ENCODE measurements at regions of chr12 and their contacts with region 1.

Region 1: DNA sequence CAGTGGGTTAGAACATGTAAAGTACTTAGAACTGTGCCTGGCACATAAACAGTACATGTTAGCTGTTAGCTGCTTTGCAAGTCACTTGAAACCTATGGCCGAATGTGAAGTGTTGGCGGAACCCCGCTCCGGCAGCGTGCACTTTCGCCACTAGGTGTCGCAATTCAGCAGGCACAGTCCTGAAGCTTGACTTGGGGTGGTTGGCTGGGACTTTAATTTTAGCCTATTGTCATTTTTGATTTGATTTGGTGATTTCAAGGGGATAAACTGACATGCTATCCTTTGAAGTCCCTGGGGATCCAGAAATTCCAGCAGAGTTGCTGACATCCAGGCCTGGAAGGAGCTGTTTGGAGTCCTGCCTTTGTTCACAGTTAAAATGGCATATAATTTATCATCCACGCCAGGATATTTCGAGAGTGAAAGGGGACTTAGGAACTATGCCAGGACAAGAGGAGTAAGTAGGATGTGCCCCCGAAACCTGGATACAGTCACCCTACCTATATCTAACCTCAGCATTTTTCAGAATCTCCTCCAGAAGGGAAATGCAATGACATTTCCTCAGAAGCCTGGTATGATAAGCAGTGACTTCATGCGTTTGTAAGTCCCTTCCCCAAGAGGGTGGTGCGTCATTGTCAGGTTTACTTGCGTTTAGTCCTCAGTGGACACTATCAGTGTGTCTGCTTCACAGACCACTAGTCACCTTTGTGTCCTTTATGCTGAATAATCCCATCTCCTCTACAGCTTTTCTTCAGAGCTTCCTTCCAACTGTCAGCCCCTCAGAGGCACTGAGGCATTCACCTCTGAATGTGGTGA is 3.5 kb upstream of the TSPAN9 start:
- DNase-seq: peak; percentile 80 to 89 (median 85)
- ATAC-seq: peak in 3 of 4 donors; percentile 21 to 58 (median 43)
- H3K4me3 ChIP-seq: no peak overlapping the region
- H3K27ac ChIP-seq: peak overlapping the region in 7 of 12 donors; percentile 3 to 64 (median 32)
- H3K4me1 ChIP-seq: peaks cover 0 to 48% (median 25%) of the 10 kb centered on the region in 12 donors
- H3K27me3 ChIP-seq: peaks cover 0 to 13% (median 0%) of the 10 kb centered on the region in 9 donors
- CTCF ChIP-seq: peak; percentile 96 to 100 (median 99)
- POLR2A ChIP-seq: no peak

Region 2: DNA sequence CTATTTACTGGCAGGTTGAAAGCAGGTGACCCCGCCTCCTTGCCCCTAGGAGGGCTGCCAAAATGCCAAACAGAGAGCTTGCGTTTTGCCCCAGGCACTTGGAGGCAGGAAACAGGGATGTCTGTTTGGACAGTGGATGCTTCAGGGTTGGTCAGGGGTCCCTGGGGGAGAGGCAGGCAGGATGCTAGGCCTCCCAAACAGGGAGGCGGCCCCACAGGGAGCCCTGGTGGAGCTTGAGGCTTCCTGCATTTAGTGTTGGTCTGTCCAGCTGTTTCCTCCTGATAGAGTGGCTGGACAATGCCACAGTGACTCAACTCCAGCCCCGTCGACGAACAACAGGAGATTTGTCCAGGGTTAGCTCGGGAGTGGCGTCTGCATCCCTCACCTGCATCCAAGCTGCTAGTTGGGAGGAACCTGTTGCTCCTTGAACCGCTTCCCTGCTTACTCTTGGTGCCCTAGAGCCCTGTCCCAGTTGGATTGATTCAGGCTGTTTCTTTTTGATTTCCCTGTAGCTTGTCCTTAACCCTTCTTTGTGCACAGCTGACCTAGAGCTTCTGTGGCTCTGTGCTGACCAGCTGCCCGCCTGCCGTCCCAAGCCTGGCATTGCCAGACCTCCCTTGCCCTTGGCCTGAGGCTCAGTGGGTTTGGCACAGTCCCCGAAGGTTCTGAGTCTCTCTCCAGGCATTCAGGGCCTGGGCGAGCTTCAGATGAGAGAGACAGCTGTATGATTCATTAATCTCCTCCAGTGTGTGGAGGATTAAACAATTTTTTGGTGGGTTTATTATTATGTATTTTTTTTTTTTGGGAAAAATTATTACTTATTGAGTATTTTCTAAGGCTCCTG is 49.4 kb after region 1 on chr12:
- intact Hi-C with region 1: loop called in 4 of 10 experiments (anchors 2 to 5 kb)
- DNase-seq: peak; percentile 75 to 85 (median 84)
- ATAC-seq: peak; percentile 43 to 83 (median 69)
- H3K4me3 ChIP-seq: no peak overlapping the region
- H3K27ac ChIP-seq: peak overlapping the region; percentile 38 to 86 (median 72)
- H3K4me1 ChIP-seq: peaks cover 21 to 58% (median 52%) of the 10 kb centered on the region in 12 donors
- H3K27me3 ChIP-seq: no peaks in the 10 kb centered on the region
- CTCF ChIP-seq: peak in 7 of 12 donors; percentile 12 to 44 (median 20)
- POLR2A ChIP-seq: no peak

Region 3: GRCh38 chr12:3129301-3130056 is 55.8 kb after region 1 on chr12:
- intact Hi-C with region 1: loop called in 8 of 10 experiments (anchors 2 to 5 kb)
- DNase-seq: no peak
- ATAC-seq: peak in 1 of 4 donors; percentile 3
- H3K4me3 ChIP-seq: no peak overlapping the region
- H3K27ac ChIP-seq: peak overlapping the region; percentile 67 to 89 (median 80)
- H3K4me1 ChIP-seq: peaks cover 19 to 54% (median 47%) of the 10 kb centered on the region in 12 donors
- H3K27me3 ChIP-seq: no peaks in the 10 kb centered on the region
- CTCF ChIP-seq: no peak
- POLR2A ChIP-seq: no peak

Region 4: GRCh38 chr12:3135522-3136461 is 62.1 kb after region 1 on chr12:
- intact Hi-C with region 1: loop called in 5 of 10 experiments (anchors 2 to 5 kb)
- DNase-seq: peak in 2 of 5 donors; percentile 37 to 52
- ATAC-seq: peak; percentile 6 to 44 (median 26)
- H3K4me3 ChIP-seq: no peak overlapping the region
- H3K27ac ChIP-seq: peak overlapping the region in 3 of 12 donors; percentile 28 to 80 (median 36)
- H3K4me1 ChIP-seq: peaks cover 13 to 98% (median 76%) of the 10 kb centered on the region in 12 donors
- H3K27me3 ChIP-seq: no peaks in the 10 kb centered on the region
- CTCF ChIP-seq: peak; percentile 70 to 88 (median 81)
- POLR2A ChIP-seq: no peak

Region 5: GRCh38 chr12:3275171-3276041 is 201.8 kb after region 1 on chr12:
- intact Hi-C with region 1: loop called (anchors 1 to 5 kb)
- DNase-seq: peak; percentile 69 to 88 (median 78)
- ATAC-seq: peak; percentile 42 to 63 (median 51)
- H3K4me3 ChIP-seq: no peak overlapping the region
- H3K27ac ChIP-seq: peak overlapping the region in 10 of 12 donors; percentile 49 to 85 (median 68)
- H3K4me1 ChIP-seq: peaks cover 7 to 100% (median 42%) of the 10 kb centered on the region in 12 donors
- H3K27me3 ChIP-seq: no peaks in the 10 kb centered on the region
- CTCF ChIP-seq: peak; percentile 95 to 100 (median 99)
- POLR2A ChIP-seq: no peak

Measured in heart left ventricle (tissue), 16 donors.